B cell (primary cell): ENCODE measurements at regions of chr19 and their contacts with region 1.

Region 1: DNA sequence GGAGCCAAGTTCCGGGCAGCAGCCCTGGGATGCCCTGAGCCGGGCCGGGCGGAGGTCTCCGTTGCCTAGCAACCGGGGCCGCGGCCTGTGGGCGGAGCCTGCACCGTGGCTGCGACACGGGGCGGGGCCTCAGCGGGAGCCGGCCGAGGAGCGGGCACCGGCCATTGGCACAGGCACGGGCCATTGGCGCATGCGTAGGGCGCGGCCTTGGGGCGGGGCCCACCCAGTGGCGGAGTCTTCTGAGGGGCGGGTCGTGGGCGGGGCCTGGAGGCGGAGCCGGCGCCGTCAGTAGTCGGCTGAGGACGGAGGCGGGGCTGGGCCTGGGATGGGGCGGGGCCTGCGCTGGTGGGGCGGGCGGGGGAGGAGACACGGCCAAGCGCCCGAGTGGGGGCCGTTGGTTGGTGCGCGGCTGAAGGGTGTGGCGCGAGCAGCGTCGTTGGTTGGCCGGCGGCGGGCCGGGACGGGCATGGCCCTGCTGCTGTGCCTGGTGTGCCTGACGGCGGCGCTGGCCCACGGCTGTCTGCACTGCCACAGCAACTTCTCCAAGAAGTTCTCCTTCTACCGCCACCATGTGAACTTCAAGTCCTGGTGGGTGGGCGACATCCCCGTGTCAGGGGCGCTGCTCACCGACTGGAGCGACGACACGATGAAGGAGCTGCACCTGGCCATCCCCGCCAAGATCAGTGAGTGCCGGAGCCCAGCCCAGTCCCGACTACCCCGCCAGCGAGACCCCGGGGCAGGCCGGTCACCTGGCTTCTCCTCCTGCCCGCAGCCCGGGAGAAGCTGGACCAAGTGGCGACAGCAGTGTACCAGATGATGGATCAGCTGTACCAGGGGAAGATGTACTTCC is at the start of gene IZUMO4:
- DNase-seq: peak; percentile 99
- ATAC-seq: peak; percentile 78
- H3K4me3 ChIP-seq: peak within 1 kb of the TSS; percentile 75 to 89 (median 83)
- H3K4me3 Mint-ChIP-seq: peak within 1 kb of the TSS; percentile 99
- H3K27ac ChIP-seq: peak within 1 kb of the TSS; percentile 81 to 95
- H3K27ac Mint-ChIP-seq: peak within 1 kb of the TSS; percentile 97
- H3K4me1 ChIP-seq: peaks cover 34 to 49% of the 10 kb centered on the region in 2 donors
- H3K4me1 Mint-ChIP-seq: peaks cover 37% of the 10 kb centered on the region
- H3K27me3 ChIP-seq: no peaks in the 10 kb centered on the region
- H3K27me3 Mint-ChIP-seq: no peaks in the 10 kb centered on the region
- CTCF ChIP-seq: peak; percentile 54
- total RNA-seq, gene IZUMO4: 80.8 and 93.9 TPM in 2 replicates

Region 2: DNA sequence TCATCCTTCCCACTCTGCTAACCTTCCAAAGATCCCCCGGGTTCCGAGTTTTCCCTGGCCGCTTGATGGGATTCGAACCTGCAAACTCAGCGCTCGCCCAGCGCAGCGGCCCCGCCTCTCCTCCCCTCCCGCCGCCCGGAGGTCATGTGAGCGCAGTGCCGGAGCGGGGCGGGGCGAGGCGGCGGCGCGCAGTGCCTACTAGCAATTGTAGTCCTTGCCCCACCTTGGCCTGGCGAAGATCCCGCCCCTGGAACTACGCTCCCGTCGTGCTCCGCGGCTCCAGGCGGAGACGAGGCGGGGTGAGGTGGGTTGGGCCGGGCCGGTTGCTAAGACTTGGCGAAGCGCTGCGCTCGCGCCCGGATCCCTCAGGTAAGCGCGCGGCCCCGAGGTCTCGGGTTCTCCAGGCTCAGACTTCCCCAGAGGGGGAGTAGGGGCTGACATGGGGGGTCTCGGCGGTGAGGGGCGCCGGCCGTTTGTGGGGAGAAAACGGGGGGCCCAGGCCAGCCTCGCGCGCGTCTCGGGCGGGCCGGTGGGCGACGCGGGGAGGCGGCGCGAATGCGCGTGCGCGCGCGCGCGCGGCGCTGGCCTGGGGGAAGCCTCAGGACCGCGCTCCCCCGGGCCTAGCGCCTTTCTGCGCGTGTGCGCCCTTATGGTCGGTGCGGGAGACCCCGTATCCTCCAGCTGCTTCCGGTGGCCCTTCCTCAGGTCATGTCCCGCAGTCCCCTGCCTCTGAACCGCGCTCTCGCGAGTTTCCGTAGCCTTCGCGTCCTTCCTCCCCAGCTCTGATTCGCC is 191.4 kb before region 1 on chr19 and contains the starts of genes ADAT3 and SCAMP4:
- CTCF ChIA-PET with region 1: no interaction called
- POLR2A ChIA-PET with region 1: no interaction called
- intact Hi-C with region 1: loop called (anchors 10 kb)
- DNase-seq: peak; percentile 98
- ATAC-seq: peak; percentile 92
- H3K4me3 ChIP-seq: peak within 1 kb of the TSS; percentile 8 to 75 (median 66)
- H3K4me3 Mint-ChIP-seq: peak within 1 kb of the TSS; percentile 90
- H3K27ac ChIP-seq: peak within 1 kb of the TSS; percentile 78 to 90
- H3K27ac Mint-ChIP-seq: peak within 1 kb of the TSS; percentile 96
- H3K4me1 ChIP-seq: peaks cover 48 to 70% of the 10 kb centered on the region in 2 donors
- H3K4me1 Mint-ChIP-seq: peaks cover 49% of the 10 kb centered on the region
- H3K27me3 ChIP-seq: no peaks in the 10 kb centered on the region
- H3K27me3 Mint-ChIP-seq: no peaks in the 10 kb centered on the region
- CTCF ChIP-seq: no peak
- total RNA-seq, gene ADAT3: 13.4 and 13.9 TPM in 2 replicates
- total RNA-seq, gene SCAMP4: 60.0 and 62.9 TPM in 2 replicates

Region 3: DNA sequence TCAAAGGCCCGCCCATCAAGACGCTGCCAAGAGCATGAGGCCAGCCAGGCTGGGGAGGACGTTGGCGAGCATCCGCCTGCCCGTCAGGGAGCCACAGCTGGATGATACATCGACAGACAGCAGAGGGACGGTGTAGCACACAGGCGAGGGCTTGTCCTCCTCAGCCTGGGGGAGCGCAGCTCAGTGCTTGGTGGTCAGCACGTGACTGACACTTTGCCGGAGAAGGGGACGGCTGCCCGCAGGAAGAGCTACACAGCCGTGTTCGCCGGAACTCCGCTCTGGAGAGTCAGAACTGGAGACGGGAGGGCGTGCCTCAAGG is 121.6 kb before region 1 on chr19:
- CTCF ChIA-PET with region 1: no interaction called
- POLR2A ChIA-PET with region 1: no interaction called
- intact Hi-C with region 1: no loop called
- DNase-seq: no peak
- ATAC-seq: no peak
- H3K4me3 ChIP-seq: no peak overlapping the region
- H3K4me3 Mint-ChIP-seq: no peak overlapping the region
- H3K27ac ChIP-seq: no peak overlapping the region
- H3K27ac Mint-ChIP-seq: no peak overlapping the region
- H3K4me1 ChIP-seq: peaks cover 0 to 6% of the 10 kb centered on the region in 2 donors
- H3K4me1 Mint-ChIP-seq: peaks cover 4% of the 10 kb centered on the region
- H3K27me3 ChIP-seq: no peaks in the 10 kb centered on the region
- H3K27me3 Mint-ChIP-seq: no peaks in the 10 kb centered on the region
- CTCF ChIP-seq: no peak

Region 4: DNA sequence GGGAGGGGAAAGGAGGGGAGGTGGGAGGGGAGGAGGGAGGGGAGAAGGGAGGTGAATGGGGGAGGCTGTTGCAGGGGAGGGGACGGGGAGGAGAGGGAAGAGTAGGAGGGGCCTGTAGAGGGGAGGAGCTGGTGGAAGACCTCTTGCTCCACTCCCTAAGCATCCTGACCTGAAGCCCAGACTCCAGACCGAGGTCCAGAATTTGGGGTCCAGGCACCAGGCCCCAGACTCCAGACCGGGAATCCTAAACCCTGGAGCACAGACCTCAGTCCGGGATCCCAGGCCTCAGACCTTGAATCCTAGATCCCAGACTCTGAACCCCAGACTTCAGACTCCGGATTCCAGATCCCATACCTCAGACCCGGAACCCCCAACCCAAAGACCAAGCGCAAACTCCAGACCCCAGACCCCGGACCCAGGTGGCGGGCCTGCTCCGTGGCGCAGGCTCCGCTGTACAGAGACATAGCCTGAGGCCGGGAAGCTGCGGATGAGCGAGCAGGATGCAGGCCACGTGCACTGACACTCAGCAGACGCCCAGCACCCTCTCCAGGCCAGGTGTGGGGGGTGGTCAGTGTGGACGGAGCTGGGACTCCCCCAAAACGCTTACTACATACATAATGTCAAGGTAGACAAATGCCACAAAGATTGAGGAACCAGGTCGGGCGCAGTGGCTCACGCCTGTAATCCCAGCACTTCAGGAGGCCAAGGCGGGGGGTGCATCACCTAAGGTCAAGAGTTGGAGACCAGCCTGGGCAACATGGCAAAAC is 80.5 kb before region 1 on chr19:
- CTCF ChIA-PET with region 1: interaction called, 18 read pairs
- POLR2A ChIA-PET with region 1: interaction called, 6 read pairs
- intact Hi-C with region 1: loop called (anchors 2 kb)
- DNase-seq: peak; percentile 67
- ATAC-seq: peak; percentile 72
- H3K4me3 ChIP-seq: peak overlapping the region in 3 of 5 experiments; percentile 28 to 44 (median 39)
- H3K4me3 Mint-ChIP-seq: peak overlapping the region; percentile 47
- H3K27ac ChIP-seq: peak overlapping the region in 1 of 2 donors; percentile 7
- H3K27ac Mint-ChIP-seq: peak overlapping the region; percentile 41
- H3K4me1 ChIP-seq: peaks cover 15 to 24% of the 10 kb centered on the region in 2 donors
- H3K4me1 Mint-ChIP-seq: peaks cover 25% of the 10 kb centered on the region
- H3K27me3 ChIP-seq: no peaks in the 10 kb centered on the region
- H3K27me3 Mint-ChIP-seq: no peaks in the 10 kb centered on the region
- CTCF ChIP-seq: no peak

Region 5: GRCh38 chr19:2050991-2051772 is 45.5 kb before region 1 on chr19 and contains the start of gene MKNK2:
- CTCF ChIA-PET with region 1: interaction called, 29 read pairs
- POLR2A ChIA-PET with region 1: interaction called, 111 read pairs
- intact Hi-C with region 1: loop called (anchors 1 kb)
- DNase-seq: peak; percentile 97
- ATAC-seq: peak; percentile 65
- H3K4me3 ChIP-seq: peak within 1 kb of the TSS; percentile 62 to 98 (median 94)
- H3K4me3 Mint-ChIP-seq: peak within 1 kb of the TSS; percentile 99
- H3K27ac ChIP-seq: peak within 1 kb of the TSS; percentile 99
- H3K27ac Mint-ChIP-seq: peak within 1 kb of the TSS; percentile 98
- H3K4me1 ChIP-seq: peaks cover 79 to 85% of the 10 kb centered on the region in 2 donors
- H3K4me1 Mint-ChIP-seq: peaks cover 67% of the 10 kb centered on the region
- H3K27me3 ChIP-seq: no peaks in the 10 kb centered on the region
- H3K27me3 Mint-ChIP-seq: no peaks in the 10 kb centered on the region
- CTCF ChIP-seq: peak; percentile 45
- total RNA-seq, gene MKNK2: 777 and 813 TPM in 2 replicates

Region 6: GRCh38 chr19:2070436-2070827 is 26.3 kb before region 1 on chr19:
- CTCF ChIA-PET with region 1: interaction called, 96 read pairs
- POLR2A ChIA-PET with region 1: interaction called, 13 read pairs
- intact Hi-C with region 1: no loop called
- DNase-seq: no peak
- ATAC-seq: no peak
- H3K4me3 ChIP-seq: no peak overlapping the region
- H3K4me3 Mint-ChIP-seq: no peak overlapping the region
- H3K27ac ChIP-seq: peak overlapping the region in 1 of 2 donors; percentile 64
- H3K27ac Mint-ChIP-seq: peak overlapping the region; percentile 10
- H3K4me1 ChIP-seq: peaks cover 30 to 57% of the 10 kb centered on the region in 2 donors
- H3K4me1 Mint-ChIP-seq: peaks cover 54% of the 10 kb centered on the region
- H3K27me3 ChIP-seq: no peaks in the 10 kb centered on the region
- H3K27me3 Mint-ChIP-seq: no peaks in the 10 kb centered on the region
- CTCF ChIP-seq: no peak

Region 7: DNA sequence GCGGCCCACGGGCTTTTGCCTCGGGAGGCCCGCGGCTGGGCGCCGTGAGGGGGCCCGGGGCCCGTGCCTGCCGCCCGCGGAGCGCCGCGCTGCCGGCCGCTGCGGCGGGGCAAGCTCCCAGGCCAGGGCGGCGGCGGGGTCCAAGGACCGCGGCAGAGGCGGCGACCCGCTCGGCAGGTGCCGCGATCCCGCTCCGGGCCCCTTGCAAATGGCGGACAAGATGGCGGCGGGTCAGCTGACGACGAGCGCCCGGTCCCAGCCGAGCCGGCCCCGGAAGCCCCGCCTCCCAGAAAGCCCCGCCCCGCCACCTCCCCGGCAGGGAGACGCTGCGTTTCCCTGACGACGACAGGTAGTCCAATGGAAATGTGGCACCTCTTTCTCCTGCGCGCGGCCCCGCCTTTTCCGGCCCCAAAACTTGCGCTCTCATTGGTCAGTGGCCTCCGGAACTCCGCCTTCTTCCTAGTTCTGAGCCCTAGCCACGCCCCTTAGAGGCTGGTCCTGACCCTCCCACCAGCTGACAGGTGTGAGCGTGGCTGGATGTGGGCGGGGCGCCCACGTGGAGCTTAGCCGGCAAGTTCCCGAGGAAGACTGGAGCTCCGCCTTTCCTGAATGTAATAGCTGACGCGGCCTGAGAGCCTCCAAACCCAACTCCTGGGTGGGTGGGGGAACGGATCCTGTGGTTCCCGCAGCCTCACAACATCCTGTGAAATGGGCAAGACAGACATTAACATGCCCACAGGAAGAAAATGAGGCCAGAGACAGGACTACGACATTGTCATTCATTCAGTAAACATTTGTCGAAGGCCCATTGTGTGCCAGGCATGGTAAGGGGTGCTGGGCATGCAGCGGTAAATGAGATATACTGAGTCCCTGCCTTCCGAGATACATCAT is 54.9 kb after region 1 on chr19 and contains the start of gene AP3D1:
- CTCF ChIA-PET with region 1: interaction called, 3 read pairs
- POLR2A ChIA-PET with region 1: interaction called, 6 read pairs
- intact Hi-C with region 1: loop called (anchors 1 kb)
- DNase-seq: peak; percentile 100
- ATAC-seq: peak; percentile 91
- H3K4me3 ChIP-seq: peak within 1 kb of the TSS; percentile 64 to 95 (median 82)
- H3K4me3 Mint-ChIP-seq: peak within 1 kb of the TSS; percentile 83
- H3K27ac ChIP-seq: peak within 1 kb of the TSS; percentile 18 to 90
- H3K27ac Mint-ChIP-seq: peak within 1 kb of the TSS; percentile 90
- H3K4me1 ChIP-seq: peaks cover 18 to 36% of the 10 kb centered on the region in 2 donors
- H3K4me1 Mint-ChIP-seq: peaks cover 37% of the 10 kb centered on the region
- H3K27me3 ChIP-seq: no peaks in the 10 kb centered on the region
- H3K27me3 Mint-ChIP-seq: no peaks in the 10 kb centered on the region
- CTCF ChIP-seq: no peak
- total RNA-seq, gene AP3D1: 96.4 and 108 TPM in 2 replicates

Region 8: DNA sequence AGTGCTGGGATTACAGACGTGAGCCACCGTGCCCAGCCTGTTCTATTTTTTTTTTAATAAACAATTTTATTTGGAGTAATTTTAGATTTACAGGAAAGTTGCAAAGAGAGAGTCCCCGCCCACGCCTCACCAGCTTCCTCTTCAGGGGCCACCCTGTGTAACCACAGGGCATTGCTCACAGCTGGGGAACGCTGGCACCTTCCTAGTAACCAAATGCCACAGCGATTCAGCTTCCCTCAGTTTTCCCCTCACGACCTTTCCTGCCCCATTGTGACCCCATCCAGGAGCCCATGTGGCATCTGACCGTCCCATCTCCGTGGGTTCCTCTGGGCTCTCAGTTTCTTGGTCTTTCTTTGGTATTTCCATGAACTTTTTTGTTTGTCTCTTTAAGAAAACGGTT is 521.9 kb after region 1 on chr19:
- CTCF ChIA-PET with region 1: no interaction called
- POLR2A ChIA-PET with region 1: interaction called, 10 read pairs
- intact Hi-C with region 1: no loop called
- DNase-seq: peak; percentile 83
- ATAC-seq: peak; percentile 29
- H3K4me3 ChIP-seq: peak overlapping the region in 3 of 5 experiments; percentile 25 to 47 (median 29)
- H3K4me3 Mint-ChIP-seq: peak overlapping the region; percentile 79
- H3K27ac ChIP-seq: peak overlapping the region; percentile 78 to 79
- H3K27ac Mint-ChIP-seq: peak overlapping the region; percentile 95
- H3K4me1 ChIP-seq: peaks cover 83 to 93% of the 10 kb centered on the region in 2 donors
- H3K4me1 Mint-ChIP-seq: peaks cover 82% of the 10 kb centered on the region
- H3K27me3 ChIP-seq: no peaks in the 10 kb centered on the region
- H3K27me3 Mint-ChIP-seq: no peaks in the 10 kb centered on the region
- CTCF ChIP-seq: no peak